Gastrocnemius medialis (tissue), 4 donors: ENCODE measurements at regions of chr4 and their contacts with region 1.

Region 1: DNA sequence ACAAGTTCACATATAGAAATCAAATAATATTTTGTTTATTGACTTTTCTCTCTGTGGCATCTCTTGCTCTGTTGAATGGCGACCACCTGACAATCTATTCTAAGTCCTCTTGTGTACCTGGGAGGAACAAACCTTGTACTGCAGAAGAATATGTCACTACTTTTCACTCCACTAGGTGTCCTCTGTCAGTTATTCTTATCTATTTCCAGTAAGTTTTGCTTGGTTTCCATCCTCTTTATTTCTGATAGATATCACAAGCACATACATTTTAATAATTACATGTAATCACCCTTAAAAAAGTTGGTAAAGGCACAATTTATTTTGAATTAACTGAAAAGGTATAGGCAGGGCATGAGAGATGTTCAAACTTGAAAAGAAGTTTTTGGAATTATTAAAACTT is 238.4 kb downstream of the SNCA start:
- DNase-seq: no peak
- ATAC-seq: no peak
- H3K4me3 ChIP-seq: no peak overlapping the region
- H3K27ac ChIP-seq: no peak overlapping the region
- H3K4me1 ChIP-seq: no peaks in the 10 kb centered on the region
- H3K27me3 ChIP-seq: no peaks in the 10 kb centered on the region
- CTCF ChIP-seq: no peak
- POLR2A ChIP-seq: no peak

Region 2: GRCh38 chr4:89344571-89344970 is 254.0 kb before region 1 on chr4:
- in situ Hi-C with region 1: no loop called
- intact Hi-C with region 1: no loop called
- DNase-seq: no peak
- ATAC-seq: no peak
- H3K4me3 ChIP-seq: no peak overlapping the region
- H3K27ac ChIP-seq: no peak overlapping the region
- H3K4me1 ChIP-seq: no peaks in the 10 kb centered on the region
- H3K27me3 ChIP-seq: no peaks in the 10 kb centered on the region
- CTCF ChIP-seq: no peak
- POLR2A ChIP-seq: no peak

Region 3: GRCh38 chr4:89539374-89539773 is 59.2 kb before region 1 on chr4:
- in situ Hi-C with region 1: loop called in 1 of 4 experiments (anchors 10 kb)
- intact Hi-C with region 1: no loop called
- DNase-seq: no peak
- ATAC-seq: no peak
- H3K4me3 ChIP-seq: no peak overlapping the region
- H3K27ac ChIP-seq: no peak overlapping the region
- H3K4me1 ChIP-seq: no peaks in the 10 kb centered on the region
- H3K27me3 ChIP-seq: no peaks in the 10 kb centered on the region
- CTCF ChIP-seq: no peak
- POLR2A ChIP-seq: no peak